AG04449 (cell line): ENCODE measurements at regions of chr11 and their contacts with region 1.

Region 1: GRCh38 chr11:43895601-43896000 is 15.0 kb downstream of the ALKBH3 start:
- DNase-seq: no peak
- H3K4me3 ChIP-seq: no peak overlapping the region
- CTCF ChIP-seq: no peak

Region 2: GRCh38 chr11:43880640-43881159 is 14.9 kb before region 1 on chr11 and contains the start of gene ALKBH3:
- CTCF ChIA-PET with region 1: interaction called, 32 read pairs
- POLR2A ChIA-PET with region 1: no interaction called
- DNase-seq: peak; percentile 61
- H3K4me3 ChIP-seq: peak within 1 kb of the TSS; percentile 88
- CTCF ChIP-seq: no peak

Region 3: GRCh38 chr11:43905813-43906241 is 10.2 kb after region 1 on chr11:
- CTCF ChIA-PET with region 1: interaction called, 47 read pairs
- POLR2A ChIA-PET with region 1: no interaction called
- DNase-seq: no peak
- H3K4me3 ChIP-seq: no peak overlapping the region
- CTCF ChIP-seq: no peak

Region 4: DNA sequence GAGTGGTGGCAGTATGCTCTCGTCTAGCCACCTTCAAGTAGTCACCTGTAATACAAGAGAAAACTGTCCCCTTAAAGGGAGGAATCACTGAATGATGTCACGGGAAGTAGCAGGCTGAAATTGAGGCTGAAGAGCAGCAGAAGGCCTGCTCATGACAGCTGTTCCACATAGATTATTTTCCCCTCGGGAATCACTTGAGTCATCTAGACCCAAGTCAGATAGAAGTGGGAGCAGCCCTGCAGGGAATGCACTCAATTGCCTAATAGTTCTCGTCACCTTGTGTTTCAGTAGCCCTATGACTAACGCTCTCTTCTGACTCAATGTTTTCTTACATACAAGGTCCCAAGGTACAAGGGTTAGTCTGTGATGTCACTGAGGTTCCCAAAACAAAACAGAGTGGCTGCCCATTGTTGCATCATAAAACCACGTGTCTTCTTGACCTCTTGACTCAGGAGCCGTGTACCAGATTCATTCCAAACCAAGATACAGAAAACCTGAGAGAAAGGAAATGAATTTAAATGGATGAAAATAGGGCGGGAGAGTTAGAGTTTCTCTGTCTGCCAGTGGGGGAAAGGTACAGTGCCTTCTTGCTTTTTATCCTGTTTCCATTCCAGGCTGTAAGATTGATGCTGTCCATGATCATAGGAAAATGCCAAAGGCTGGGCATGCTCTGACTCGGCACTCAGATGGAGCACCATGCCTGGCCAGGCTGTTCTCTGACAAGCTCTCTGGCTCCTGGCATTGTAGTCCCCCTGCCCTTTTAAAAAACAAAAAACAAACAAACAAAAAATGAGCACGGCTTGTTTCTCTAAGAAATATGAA is 25.2 kb after region 1 on chr11:
- CTCF ChIA-PET with region 1: interaction called, 36 read pairs
- POLR2A ChIA-PET with region 1: no interaction called
- DNase-seq: peak; percentile 100
- H3K4me3 ChIP-seq: no peak overlapping the region
- CTCF ChIP-seq: no peak

Region 5: DNA sequence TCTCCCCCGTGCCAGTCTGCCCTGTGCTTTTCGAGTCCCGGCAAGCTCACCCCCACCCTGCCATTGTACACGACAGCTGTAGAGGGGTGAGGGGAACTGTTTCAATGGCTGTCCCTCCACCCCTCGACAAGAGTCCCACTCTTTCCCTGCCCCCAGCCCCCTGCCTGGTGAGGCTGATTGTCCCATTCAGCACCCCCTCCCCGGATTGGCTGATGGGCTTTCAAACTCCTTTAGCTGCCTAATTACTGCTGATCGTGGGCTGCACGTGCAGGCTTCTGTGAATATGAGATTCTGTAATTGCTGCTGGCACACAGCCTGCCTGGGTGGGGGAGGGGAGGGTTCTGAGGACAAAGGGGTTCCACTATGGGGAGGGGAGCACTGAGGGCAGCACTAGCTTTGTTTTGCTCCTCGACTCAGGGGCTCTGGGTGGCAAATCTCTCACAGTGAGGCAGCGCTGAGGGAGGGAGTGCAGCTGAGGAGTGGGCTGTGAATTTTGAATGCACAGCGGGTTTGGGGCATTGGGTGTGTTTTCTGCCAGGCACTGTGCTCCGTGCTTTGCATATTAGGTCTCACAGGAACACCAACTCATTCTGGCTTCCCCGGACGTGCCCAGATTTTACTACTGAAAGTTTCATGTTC is 109.6 kb after region 1 on chr11:
- CTCF ChIA-PET with region 1: interaction called, 10 read pairs
- POLR2A ChIA-PET with region 1: no interaction called
- DNase-seq: no peak
- H3K4me3 ChIP-seq: no peak overlapping the region
- CTCF ChIP-seq: no peak

Region 6: GRCh38 chr11:44036811-44037657 is 141.4 kb after region 1 on chr11:
- CTCF ChIA-PET with region 1: interaction called, 444 read pairs
- POLR2A ChIA-PET with region 1: interaction called, 3 read pairs
- DNase-seq: peak; percentile 41
- H3K4me3 ChIP-seq: no peak overlapping the region
- CTCF ChIP-seq: peak; percentile 83

Region 7: DNA sequence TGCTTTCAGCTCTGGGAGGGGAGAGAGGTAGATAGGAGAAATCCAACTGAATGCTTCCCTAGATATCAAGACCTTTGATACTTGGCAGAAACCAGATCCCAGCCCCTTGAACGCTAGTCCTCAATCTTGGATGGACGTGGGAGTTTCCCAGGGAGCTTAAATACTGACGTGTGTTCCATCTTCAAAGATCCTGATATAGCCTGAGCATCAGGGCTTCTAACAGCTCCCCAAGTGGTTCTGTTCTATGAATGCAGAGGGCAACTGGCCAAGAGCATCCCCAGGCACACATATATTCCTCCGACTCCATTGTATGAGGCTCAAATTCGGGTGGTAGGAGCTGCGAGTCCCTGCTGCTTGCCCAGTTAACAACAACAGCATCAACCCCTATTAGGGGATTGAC is 161.7 kb after region 1 on chr11:
- CTCF ChIA-PET with region 1: interaction called, 17 read pairs
- POLR2A ChIA-PET with region 1: no interaction called
- DNase-seq: no peak
- H3K4me3 ChIP-seq: no peak overlapping the region
- CTCF ChIP-seq: no peak